ENCODE measurements at regions of chr20 and their contacts with region 1.

Region 1: DNA sequence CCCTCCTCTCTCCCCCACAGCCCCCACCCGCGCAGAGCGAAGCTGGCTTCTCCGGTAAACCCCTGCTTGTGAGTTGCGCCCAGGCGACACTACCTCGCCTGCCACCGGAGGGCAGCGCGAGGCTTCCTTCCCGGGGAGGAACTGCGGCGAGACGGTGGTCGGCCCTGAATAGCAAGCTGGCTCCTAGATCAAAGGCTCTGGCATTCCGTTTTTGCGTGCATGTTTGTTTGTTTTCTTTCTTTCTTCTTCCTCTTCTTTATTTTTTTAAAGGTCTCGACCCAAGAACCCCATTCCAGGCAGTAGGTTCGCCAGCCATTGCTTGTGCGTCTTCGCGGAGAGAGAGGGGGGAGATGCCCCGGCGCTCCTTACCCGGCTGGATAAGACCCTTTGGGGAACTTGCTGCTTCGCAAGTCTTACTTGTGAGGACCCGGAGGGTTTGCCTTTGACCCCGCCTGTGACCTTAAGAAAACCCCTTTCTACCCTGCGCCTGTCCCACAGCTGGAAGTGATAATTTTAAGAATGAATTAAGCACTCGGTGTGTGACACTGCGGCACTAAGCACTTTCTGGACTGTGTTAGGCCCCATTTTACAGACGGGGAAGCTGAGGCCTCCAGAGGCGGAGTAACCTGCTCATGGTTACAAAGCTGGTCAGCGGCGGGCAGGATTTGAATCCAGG is 92.7 kb upstream of the SIRPA start:
- DNase-seq: peak; percentile 70
- ATAC-seq: peak; percentile 62
- H3K4me3 ChIP-seq: peak overlapping the region; percentile 62
- H3K27ac ChIP-seq: no peak overlapping the region
- H3K4me1 ChIP-seq: peaks cover 29% of the 10 kb centered on the region
- H3K27me3 ChIP-seq: no peaks in the 10 kb centered on the region
- CTCF ChIP-seq: peak; percentile 96

Region 2: DNA sequence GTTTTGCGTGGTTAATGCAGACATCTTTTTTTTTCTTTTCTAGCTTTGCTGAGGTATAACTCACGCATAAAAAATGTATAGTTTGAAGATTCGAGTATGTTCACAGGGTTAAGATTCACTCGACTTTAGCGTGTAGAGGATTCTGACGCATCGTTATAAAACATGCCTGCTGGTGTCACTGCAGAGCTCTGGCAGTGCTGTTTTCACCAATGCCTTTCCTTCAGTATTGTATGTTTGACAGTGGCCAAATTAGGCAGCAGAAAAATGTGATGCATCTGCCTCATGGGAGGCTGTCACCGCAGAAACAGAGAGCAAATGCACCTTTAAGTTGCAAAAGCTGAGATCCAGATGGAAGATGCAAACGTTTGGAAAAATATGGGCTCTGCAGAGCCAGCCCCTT is 293.3 kb before region 1 on chr20:
- CTCF ChIA-PET with region 1: interaction called, 3 read pairs
- POLR2A ChIA-PET with region 1: no interaction called
- intact Hi-C with region 1: loop called (anchors 1 kb)
- DNase-seq: peak; percentile 90
- ATAC-seq: peak; percentile 85
- H3K4me3 ChIP-seq: no peak overlapping the region
- H3K27ac ChIP-seq: peak overlapping the region; percentile 41
- H3K4me1 ChIP-seq: peaks cover 50% of the 10 kb centered on the region
- H3K27me3 ChIP-seq: no peaks in the 10 kb centered on the region
- CTCF ChIP-seq: peak; percentile 89

Region 3: GRCh38 chr20:1815502-1816085 is 13.1 kb after region 1 on chr20:
- CTCF ChIA-PET with region 1: interaction called, 4 read pairs
- POLR2A ChIA-PET with region 1: interaction called, 14 read pairs
- intact Hi-C with region 1: no loop called
- DNase-seq: no peak
- ATAC-seq: no peak
- H3K4me3 ChIP-seq: no peak overlapping the region
- H3K27ac ChIP-seq: peak overlapping the region; percentile 23; the same call in 1 of the 2 replicates
- H3K4me1 ChIP-seq: peaks cover 54% of the 10 kb centered on the region
- H3K27me3 ChIP-seq: no peaks in the 10 kb centered on the region
- CTCF ChIP-seq: no peak

Region 4: DNA sequence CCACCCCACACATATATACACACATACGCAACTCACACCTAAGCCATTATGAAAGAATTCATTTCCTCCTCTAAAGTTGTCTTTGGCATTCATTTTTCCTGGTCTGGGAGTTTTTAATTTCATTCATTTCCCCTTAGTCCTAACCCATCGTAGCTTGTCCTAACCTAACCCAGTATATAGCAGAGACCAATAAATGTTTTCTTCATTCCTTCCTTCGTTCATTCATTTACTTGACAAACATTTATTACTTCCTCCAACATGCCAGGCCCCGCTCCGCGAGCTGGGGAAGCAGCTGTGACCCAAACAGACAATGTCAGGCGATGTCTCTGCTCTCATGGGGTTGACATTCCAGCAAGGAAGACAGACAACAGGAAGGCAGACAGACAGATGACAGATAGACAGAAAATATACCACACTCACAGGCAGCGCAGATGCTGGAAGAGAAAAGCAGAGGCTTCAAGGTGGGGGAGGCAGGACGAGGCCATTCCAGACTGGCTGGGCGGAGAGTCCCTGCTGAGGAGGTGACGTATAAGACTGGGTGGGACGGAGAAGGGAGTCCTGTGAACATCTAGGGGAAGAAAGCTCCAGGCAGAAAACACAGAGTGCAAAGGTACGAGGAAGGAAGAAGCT is 58.9 kb after region 1 on chr20:
- CTCF ChIA-PET with region 1: no interaction called
- POLR2A ChIA-PET with region 1: no interaction called
- intact Hi-C with region 1: no loop called
- DNase-seq: no peak
- ATAC-seq: no peak
- H3K4me3 ChIP-seq: no peak overlapping the region
- H3K27ac ChIP-seq: no peak overlapping the region
- H3K4me1 ChIP-seq: no peaks in the 10 kb centered on the region
- H3K27me3 ChIP-seq: no peaks in the 10 kb centered on the region
- CTCF ChIP-seq: no peak

Region 5: GRCh38 chr20:1900321-1900801 is 97.8 kb after region 1 on chr20:
- CTCF ChIA-PET with region 1: interaction called, 14 read pairs
- POLR2A ChIA-PET with region 1: no interaction called
- intact Hi-C with region 1: loop called (anchors 5 kb)
- DNase-seq: peak; percentile 81
- ATAC-seq: peak; percentile 94
- H3K4me3 ChIP-seq: no peak overlapping the region
- H3K27ac ChIP-seq: no peak overlapping the region
- H3K4me1 ChIP-seq: peaks cover 7% of the 10 kb centered on the region; the same call in 1 of the 2 replicates
- H3K27me3 ChIP-seq: no peaks in the 10 kb centered on the region
- CTCF ChIP-seq: peak; percentile 84

Region 6: DNA sequence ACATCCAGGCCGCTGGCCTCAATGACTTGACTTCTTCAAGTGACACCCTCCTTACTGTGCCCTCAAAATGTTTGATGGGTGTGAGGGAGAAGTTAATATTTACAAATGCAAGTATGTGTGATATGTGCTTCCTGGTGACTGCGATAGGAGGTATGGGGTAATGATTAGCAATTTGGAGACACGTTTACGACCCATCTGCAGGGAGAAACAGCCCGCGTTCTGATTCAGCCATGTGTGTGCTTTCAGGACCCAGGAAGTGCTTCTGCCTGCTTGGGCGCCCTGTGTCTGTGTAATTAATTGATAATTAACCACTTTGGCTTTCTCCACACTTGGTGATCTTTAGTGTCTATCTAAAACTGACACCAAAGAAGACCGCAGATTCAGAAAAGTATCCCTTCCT is 117.7 kb after region 1 on chr20:
- CTCF ChIA-PET with region 1: no interaction called
- POLR2A ChIA-PET with region 1: no interaction called
- intact Hi-C with region 1: no loop called
- DNase-seq: no peak
- ATAC-seq: no peak
- H3K4me3 ChIP-seq: no peak overlapping the region
- H3K27ac ChIP-seq: no peak overlapping the region
- H3K4me1 ChIP-seq: no peaks in the 10 kb centered on the region
- H3K27me3 ChIP-seq: no peaks in the 10 kb centered on the region
- CTCF ChIP-seq: no peak

Region 7: GRCh38 chr20:2101865-2102584 is 299.5 kb after region 1 on chr20:
- CTCF ChIA-PET with region 1: no interaction called
- POLR2A ChIA-PET with region 1: no interaction called
- intact Hi-C with region 1: loop called (anchors 10 kb)
- DNase-seq: peak; percentile 90
- ATAC-seq: peak; percentile 79
- H3K4me3 ChIP-seq: peak overlapping the region; percentile 87
- H3K27ac ChIP-seq: peak overlapping the region; percentile 88
- H3K4me1 ChIP-seq: peaks cover 27% of the 10 kb centered on the region
- H3K27me3 ChIP-seq: no peaks in the 10 kb centered on the region
- CTCF ChIP-seq: no peak

Measured in PC-3 (cell line).